HCT116 (cell line): ENCODE measurements at regions of chr17 and their contacts with region 1.

Region 1: GRCh38 chr17:50853015-50853615 is 13.0 kb downstream of the TOB1 start:
- DNase-seq: no peak
- ATAC-seq: no peak
- H3K4me3 ChIP-seq: no peak overlapping the region
- H3K27ac ChIP-seq: no peak overlapping the region
- H3K4me1 ChIP-seq: peaks cover 5 to 11% of the 10 kb centered on the region in 2 experiments
- H3K27me3 ChIP-seq: no peaks in the 10 kb centered on the region
- CTCF ChIP-seq: no peak
- POLR2A ChIP-seq: no peak
- RAD21 ChIP-seq: no peak

Region 2: GRCh38 chr17:50661795-50662391 is 191.2 kb before region 1 on chr17:
- CTCF ChIA-PET with region 1: no interaction called
- POLR2A ChIA-PET with region 1: no interaction called
- RAD21 ChIA-PET with region 1: no interaction called
- intact Hi-C with region 1: no loop called
- DNase-seq: peak; percentile 92
- ATAC-seq: peak; percentile 82
- H3K4me3 ChIP-seq: peak overlapping the region; percentile 19 to 44
- H3K27ac ChIP-seq: peak overlapping the region; percentile 96
- H3K4me1 ChIP-seq: peaks cover 61 to 91% of the 10 kb centered on the region in 2 experiments
- H3K27me3 ChIP-seq: no peaks in the 10 kb centered on the region
- CTCF ChIP-seq: no peak
- POLR2A ChIP-seq: no peak
- RAD21 ChIP-seq: no peak

Region 3: GRCh38 chr17:50841949-50842354 is 11.2 kb before region 1 on chr17:
- CTCF ChIA-PET with region 1: interaction called, 22 read pairs
- POLR2A ChIA-PET with region 1: no interaction called
- RAD21 ChIA-PET with region 1: interaction called in 1 of 2 experiments, 3 read pairs
- intact Hi-C with region 1: no loop called
- DNase-seq: peak; percentile 61
- ATAC-seq: peak; percentile 95
- H3K4me3 ChIP-seq: no peak overlapping the region
- H3K27ac ChIP-seq: no peak overlapping the region
- H3K4me1 ChIP-seq: peaks cover 0 to 22% of the 10 kb centered on the region in 2 experiments; a peak in 2 of 4 replicates
- H3K27me3 ChIP-seq: no peaks in the 10 kb centered on the region
- CTCF ChIP-seq: peak; percentile 94 to 97 (median 97)
- POLR2A ChIP-seq: no peak
- RAD21 ChIP-seq: peak; percentile 96

Region 4: GRCh38 chr17:50902372-50903353 is 49.5 kb after region 1 on chr17:
- CTCF ChIA-PET with region 1: no interaction called
- POLR2A ChIA-PET with region 1: no interaction called
- RAD21 ChIA-PET with region 1: no interaction called
- intact Hi-C with region 1: no loop called
- DNase-seq: no peak
- ATAC-seq: no peak
- H3K4me3 ChIP-seq: no peak overlapping the region
- H3K27ac ChIP-seq: no peak overlapping the region
- H3K4me1 ChIP-seq: peaks cover 18 to 22% of the 10 kb centered on the region in 2 experiments
- H3K27me3 ChIP-seq: no peaks in the 10 kb centered on the region
- CTCF ChIP-seq: no peak
- POLR2A ChIP-seq: no peak
- RAD21 ChIP-seq: no peak

Region 5: GRCh38 chr17:50949989-50950881 is 97.1 kb after region 1 on chr17:
- CTCF ChIA-PET with region 1: interaction called, 85 read pairs
- POLR2A ChIA-PET with region 1: interaction called, 6 read pairs
- RAD21 ChIA-PET with region 1: interaction called, 7 to 11 read pairs
- intact Hi-C with region 1: loop called (anchors 1 kb)
- DNase-seq: peak; percentile 88
- ATAC-seq: peak; percentile 87
- H3K4me3 ChIP-seq: peak overlapping the region; percentile 29 to 42
- H3K27ac ChIP-seq: peak overlapping the region; percentile 79
- H3K4me1 ChIP-seq: peaks cover 74 to 97% of the 10 kb centered on the region in 2 experiments
- H3K27me3 ChIP-seq: no peaks in the 10 kb centered on the region
- CTCF ChIP-seq: peak; percentile 86 to 99 (median 97)
- POLR2A ChIP-seq: no peak
- RAD21 ChIP-seq: peak; percentile 100

Region 6: DNA sequence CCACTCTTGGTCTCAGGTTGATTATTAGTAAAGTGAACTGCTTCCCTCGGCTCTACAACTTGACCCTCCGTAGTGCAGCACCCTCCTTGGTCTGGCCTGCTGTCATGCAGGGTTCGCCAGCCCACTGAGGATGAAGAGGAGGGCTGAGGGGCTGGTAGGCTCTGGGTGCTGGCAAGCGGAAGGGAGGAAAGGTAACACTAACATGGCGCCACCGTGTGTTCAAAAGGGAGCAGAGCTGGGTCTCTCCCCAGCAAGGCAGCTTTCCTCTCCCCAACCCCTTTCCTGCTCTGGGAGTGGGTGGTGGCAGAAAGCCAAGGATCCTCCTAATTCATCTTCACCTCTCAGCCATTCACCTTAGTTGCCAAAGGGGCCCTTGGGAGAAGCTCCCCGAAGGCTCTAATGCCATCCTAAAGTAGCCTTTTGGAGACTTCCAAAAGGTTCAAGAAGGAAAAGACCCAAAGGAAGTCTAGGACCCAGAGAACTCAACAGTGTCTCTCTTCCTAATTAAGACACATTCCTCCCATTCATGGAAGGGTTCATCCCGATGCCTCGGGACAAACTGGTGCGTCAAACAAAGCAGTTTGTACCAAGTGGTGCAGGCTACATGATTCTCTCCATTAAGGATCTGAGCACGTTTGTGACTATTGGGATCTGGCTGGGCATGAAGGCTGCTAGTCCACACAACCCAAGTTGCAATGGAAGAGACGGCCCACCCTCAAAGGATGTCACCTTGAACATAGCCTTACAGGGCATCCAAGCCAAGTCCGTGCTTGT is 103.8 kb after region 1 on chr17:
- CTCF ChIA-PET with region 1: interaction called, 85 read pairs
- POLR2A ChIA-PET with region 1: interaction called, 6 read pairs
- RAD21 ChIA-PET with region 1: interaction called, 6 to 8 read pairs
- intact Hi-C with region 1: loop called (anchors 1 kb)
- DNase-seq: peak; percentile 31
- ATAC-seq: peak; percentile 89
- H3K4me3 ChIP-seq: no peak overlapping the region
- H3K27ac ChIP-seq: no peak overlapping the region
- H3K4me1 ChIP-seq: peaks cover 23 to 41% of the 10 kb centered on the region in 2 experiments
- H3K27me3 ChIP-seq: no peaks in the 10 kb centered on the region
- CTCF ChIP-seq: peak; percentile 79 to 94 (median 90)
- POLR2A ChIP-seq: no peak
- RAD21 ChIP-seq: peak; percentile 84

Region 7: DNA sequence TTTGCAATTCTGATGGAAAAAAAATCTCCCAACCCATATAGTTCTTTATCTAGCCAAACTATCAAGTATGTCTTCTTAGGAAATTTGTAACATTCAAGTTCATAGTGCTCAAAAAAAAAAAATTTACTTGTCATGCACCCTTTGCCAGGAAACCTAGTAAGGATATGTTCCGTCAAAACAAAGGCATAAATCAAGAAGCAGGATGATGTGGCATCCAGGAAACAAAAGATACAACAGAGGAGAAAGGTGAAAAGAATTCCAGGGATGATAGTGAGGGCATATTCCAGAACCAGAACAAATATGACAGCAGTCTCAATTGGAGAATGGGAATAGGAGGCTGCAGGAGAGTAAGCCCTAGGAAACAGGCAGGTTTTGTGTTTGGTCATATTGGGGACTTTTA is 163.0 kb after region 1 on chr17:
- CTCF ChIA-PET with region 1: no interaction called
- POLR2A ChIA-PET with region 1: no interaction called
- RAD21 ChIA-PET with region 1: no interaction called
- intact Hi-C with region 1: no loop called
- DNase-seq: no peak
- ATAC-seq: no peak
- H3K4me3 ChIP-seq: no peak overlapping the region
- H3K27ac ChIP-seq: no peak overlapping the region
- H3K4me1 ChIP-seq: no peaks in the 10 kb centered on the region
- H3K27me3 ChIP-seq: no peaks in the 10 kb centered on the region
- CTCF ChIP-seq: no peak
- POLR2A ChIP-seq: no peak
- RAD21 ChIP-seq: no peak

Region 8: DNA sequence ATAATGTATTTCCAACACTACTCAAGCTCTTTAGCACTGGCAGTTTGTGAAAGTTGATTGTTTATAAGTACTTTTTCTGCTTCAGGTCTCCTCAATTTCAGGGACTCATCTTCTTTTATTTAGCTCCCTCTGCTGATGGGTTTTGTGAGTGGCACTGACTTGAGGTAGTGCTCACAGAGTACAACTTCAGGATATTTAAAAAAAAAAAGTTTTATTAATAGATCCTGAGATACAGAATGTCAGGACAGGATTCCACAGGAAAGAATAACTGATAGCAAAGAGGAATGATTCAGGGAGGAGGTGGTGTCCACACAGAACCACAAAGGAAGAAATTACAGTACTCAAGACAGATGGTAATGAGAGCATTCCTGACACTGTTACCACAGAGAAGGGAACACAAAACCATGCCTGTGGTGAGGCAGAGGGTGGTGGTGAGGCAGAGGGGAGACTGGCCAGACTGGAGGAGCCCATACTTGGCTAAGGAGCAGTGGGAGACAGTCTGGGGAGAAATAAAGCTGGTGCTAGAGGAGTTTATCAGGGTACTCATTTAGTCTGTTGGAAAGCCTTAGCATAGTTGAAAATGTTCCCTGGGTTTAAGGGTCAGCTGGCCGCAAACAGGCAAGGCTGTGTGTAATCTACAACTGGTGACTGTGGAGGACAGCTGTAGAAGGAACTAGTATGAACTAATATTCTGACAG is 203.8 kb after region 1 on chr17:
- CTCF ChIA-PET with region 1: interaction called, 3 read pairs
- POLR2A ChIA-PET with region 1: no interaction called
- RAD21 ChIA-PET with region 1: interaction called in 1 of 2 experiments, 3 read pairs
- intact Hi-C with region 1: loop called (anchors 2 kb)
- DNase-seq: peak; percentile 32
- ATAC-seq: peak; percentile 87
- H3K4me3 ChIP-seq: no peak overlapping the region
- H3K27ac ChIP-seq: no peak overlapping the region
- H3K4me1 ChIP-seq: peaks cover 4 to 25% of the 10 kb centered on the region in 2 experiments; a peak in 3 of 4 replicates
- H3K27me3 ChIP-seq: no peaks in the 10 kb centered on the region
- CTCF ChIP-seq: peak; percentile 50 to 73 (median 73); a peak in 5 of 6 replicates
- POLR2A ChIP-seq: no peak
- RAD21 ChIP-seq: peak; percentile 72